OCI-LY7 (cell line): ENCODE measurements at regions of chr1 and their contacts with region 1.

Region 1: DNA sequence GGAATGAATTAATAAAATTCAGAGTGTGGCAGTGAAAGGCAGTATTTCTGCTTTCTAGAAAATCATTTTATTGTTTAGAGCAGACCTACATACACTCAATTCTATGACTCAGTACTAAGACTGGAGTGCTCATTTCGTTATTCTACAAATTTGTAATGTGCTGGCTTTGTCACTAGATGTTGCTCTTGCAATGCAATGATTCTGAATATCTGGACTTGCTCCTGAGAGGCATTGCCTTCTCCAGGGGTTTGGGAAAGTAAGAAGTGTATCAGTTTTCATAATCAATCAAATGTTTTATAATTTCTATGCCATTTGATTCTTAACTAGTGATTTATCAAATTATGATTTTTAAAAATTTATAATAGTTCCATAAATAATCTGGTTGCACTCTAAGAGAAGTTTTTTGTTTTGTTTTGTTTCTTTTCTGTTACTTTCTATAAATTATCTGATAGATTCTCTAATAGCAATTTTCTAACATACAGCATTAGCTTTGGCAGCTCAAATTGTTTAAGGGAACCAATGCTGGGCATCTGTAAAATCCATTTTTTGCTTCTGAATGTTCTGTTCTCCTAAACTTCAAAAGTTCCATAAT is 280.5 kb upstream of the SGIP1 start:
- DNase-seq: peak; percentile 74
- H3K4me3 ChIP-seq: no peak overlapping the region
- H3K27ac ChIP-seq: no peak overlapping the region
- H3K4me1 ChIP-seq: peaks cover 18% of the 10 kb centered on the region
- CTCF ChIP-seq: peak; percentile 98

Region 2: GRCh38 chr1:65756616-65757015 is 496.8 kb before region 1 on chr1:
- CTCF ChIA-PET with region 1: no interaction called
- POLR2A ChIA-PET with region 1: no interaction called
- intact Hi-C with region 1: no loop called
- DNase-seq: no peak
- H3K4me3 ChIP-seq: no peak overlapping the region
- H3K27ac ChIP-seq: no peak overlapping the region
- H3K4me1 ChIP-seq: no peaks in the 10 kb centered on the region
- CTCF ChIP-seq: no peak

Region 3: GRCh38 chr1:66676613-66677298 is 423.3 kb after region 1 on chr1:
- CTCF ChIA-PET with region 1: no interaction called
- POLR2A ChIA-PET with region 1: no interaction called
- intact Hi-C with region 1: no loop called
- DNase-seq: no peak
- H3K4me3 ChIP-seq: no peak overlapping the region
- H3K27ac ChIP-seq: no peak overlapping the region
- H3K4me1 ChIP-seq: no peaks in the 10 kb centered on the region
- CTCF ChIP-seq: no peak

Region 4: DNA sequence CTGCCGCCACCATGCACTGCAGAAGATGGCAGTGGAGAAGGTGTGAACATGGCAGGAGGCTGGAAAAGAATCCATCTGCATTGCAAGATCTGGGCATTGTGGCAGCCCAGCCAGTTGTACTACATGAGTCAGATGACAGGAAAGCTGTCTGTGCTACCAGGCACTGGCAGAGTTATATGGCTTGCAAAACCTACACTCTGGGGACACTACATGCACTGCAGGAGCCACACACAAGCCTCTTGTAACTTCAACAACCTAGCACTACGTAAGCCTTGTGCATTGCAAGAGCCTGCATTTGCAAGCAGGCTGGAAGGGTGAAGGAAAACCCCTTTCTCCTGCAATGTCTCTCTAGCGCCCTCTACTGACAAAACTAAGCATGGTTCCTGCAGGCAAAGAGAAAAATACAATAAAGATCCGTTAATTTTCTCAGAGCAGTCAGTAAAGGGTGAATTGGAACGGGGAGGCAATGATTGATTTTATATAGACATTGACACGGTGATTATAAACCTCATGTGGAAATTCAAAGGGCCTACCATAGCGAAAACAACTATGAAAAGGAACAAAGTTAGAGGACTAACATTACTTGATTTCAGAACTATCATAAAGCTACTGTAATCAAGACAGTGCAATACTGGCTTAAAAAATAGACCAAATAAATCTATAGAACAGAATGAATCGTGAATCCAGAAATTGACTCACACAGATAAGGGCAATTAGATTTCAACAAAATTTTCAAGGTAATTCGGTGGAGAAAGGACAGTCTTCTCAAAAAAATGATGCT is 472.6 kb after region 1 on chr1:
- CTCF ChIA-PET with region 1: no interaction called
- POLR2A ChIA-PET with region 1: no interaction called
- intact Hi-C with region 1: loop called (anchors 5 kb)
- DNase-seq: peak; percentile 73
- H3K4me3 ChIP-seq: no peak overlapping the region
- H3K27ac ChIP-seq: no peak overlapping the region
- H3K4me1 ChIP-seq: no peaks in the 10 kb centered on the region
- CTCF ChIP-seq: peak; percentile 99